Activated CD4-positive, alpha-beta T cell treated with anti-CD3 and anti-CD28 coated beads, Interleukin-2, amount 10 ng/mL, durations not matched to agents 24 days and 14 days (primary cell): ENCODE measurements at regions of chr15 and their contacts with region 1.

Region 1: DNA sequence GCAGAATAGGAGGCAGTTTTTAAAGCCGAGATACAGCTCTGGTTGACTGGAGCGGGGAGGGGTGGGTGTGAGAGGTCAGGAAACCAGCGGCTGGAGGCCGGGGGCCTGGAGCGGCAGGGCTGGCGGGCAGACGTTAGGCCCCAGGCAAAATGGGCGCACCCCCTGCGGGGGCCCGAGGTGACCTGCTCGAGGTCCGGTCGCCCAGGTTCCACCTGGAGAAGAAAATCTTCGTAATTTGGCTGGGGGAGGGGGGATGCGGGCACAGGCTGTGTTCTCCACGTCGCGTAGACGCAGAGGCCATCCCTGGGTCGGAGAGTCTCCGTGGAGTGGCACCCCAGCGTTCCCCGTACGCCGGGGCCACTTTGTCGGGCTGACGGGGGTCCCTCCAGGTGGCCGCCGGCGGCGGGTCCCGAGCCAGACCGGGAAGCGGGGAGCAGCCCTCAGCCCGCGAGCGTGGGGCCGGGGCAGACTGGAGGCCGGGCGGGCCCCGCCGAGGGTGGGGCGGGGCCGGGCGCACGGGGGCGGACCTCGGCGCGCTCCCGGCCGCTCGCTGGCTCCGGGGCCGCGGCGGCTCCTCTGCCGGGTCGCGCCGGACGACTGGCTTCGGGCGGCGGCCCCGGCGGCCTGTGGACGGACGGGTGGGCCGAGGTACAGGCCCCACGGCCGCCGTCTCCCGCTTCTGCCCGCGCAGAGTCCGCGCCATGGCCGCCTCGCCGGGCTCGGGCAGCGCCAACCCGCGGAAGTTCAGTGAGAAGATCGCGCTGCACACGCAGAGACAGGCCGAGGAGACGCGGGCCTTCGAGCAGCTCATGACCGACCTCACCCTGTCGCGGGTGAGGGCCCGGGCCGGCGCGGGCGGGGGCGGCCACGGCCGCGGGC is at the start of gene CRTC3:
- DNase-seq: peak; percentile 89
- H3K4me3 Mint-ChIP-seq: peak within 1 kb of the TSS; percentile 97
- H3K27ac Mint-ChIP-seq: peak within 1 kb of the TSS; percentile 89
- H3K4me1 Mint-ChIP-seq: peaks cover 41% of the 10 kb centered on the region
- H3K27me3 Mint-ChIP-seq: no peaks in the 10 kb centered on the region
- total RNA-seq, gene CRTC3: 48.8 and 54.2 TPM in 2 replicates

Region 2: DNA sequence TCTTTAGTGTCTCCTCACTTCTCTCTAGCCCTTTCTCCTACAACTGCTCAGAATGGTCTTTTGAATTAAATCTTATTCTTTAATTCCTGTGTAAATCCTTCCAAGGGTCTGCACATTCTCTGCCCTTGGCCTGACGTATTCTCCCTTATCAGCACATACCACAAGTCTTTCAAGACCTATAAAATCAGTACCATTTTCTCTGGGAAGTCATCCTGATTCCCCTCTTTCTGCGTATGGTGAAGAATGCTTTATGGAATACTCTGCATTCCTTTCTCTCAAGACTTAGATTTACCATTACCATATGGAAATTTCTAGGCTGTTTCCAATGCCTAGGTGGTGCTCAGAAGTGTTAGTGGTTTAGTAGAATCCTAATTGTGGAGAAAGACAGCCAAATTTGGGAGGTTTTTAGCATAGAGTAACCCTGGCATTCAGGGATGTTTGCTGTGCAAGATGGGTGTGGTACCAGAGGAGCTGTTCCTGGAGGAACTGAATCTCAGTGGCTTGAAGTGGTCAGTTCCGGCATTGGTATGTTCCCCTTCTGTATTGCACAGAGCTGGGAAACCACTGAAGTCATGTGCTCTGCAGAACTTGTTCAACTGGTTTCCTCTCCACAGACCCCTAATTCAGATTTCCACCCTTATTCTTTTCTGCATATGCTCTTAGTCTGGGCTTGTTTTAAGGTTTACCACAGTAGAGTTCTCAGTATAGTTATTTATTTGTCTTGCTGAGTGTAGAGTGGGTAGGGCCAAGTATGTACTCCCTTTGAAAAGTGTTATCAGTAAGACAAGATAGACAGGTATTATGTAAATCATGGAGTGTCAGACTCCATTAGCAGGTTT is 117.0 kb before region 1 on chr15:
- intact Hi-C with region 1: no loop called
- DNase-seq: peak; percentile 71
- H3K4me3 Mint-ChIP-seq: peak overlapping the region; percentile 67
- H3K27ac Mint-ChIP-seq: peak overlapping the region; percentile 90
- H3K4me1 Mint-ChIP-seq: peaks cover 59% of the 10 kb centered on the region
- H3K27me3 Mint-ChIP-seq: no peaks in the 10 kb centered on the region

Region 3: GRCh38 chr15:90592131-90592881 is 62.7 kb after region 1 on chr15:
- intact Hi-C with region 1: loop called (anchors 2 kb)
- DNase-seq: no peak
- H3K4me3 Mint-ChIP-seq: peak overlapping the region; percentile 4
- H3K27ac Mint-ChIP-seq: peak overlapping the region; percentile 72
- H3K4me1 Mint-ChIP-seq: peaks cover 65% of the 10 kb centered on the region
- H3K27me3 Mint-ChIP-seq: no peaks in the 10 kb centered on the region